ENCODE measurements at regions of chr1 and their contacts with region 1.

Region 1: GRCh38 chr1:202656951-202657646 is 53.2 kb downstream of the SYT2 start:
- DNase-seq: peak; percentile 39 to 86
- H3K4me3 ChIP-seq: no peak overlapping the region
- H3K27ac ChIP-seq: no peak overlapping the region
- H3K4me1 ChIP-seq: peaks cover 0 to 3% (median 2%) of the 10 kb centered on the region in 4 experiments; a peak in 3 of 7 replicates
- H3K27me3 ChIP-seq: no peaks in the 10 kb centered on the region; a peak in 1 of 7 replicates
- CTCF ChIP-seq: peak; percentile 60 to 73 (median 64)
- EP300 ChIP-seq: no peak
- POLR2A ChIP-seq: no peak
- RAD21 ChIP-seq: peak; percentile 36 to 50; a peak in 3 of 4 replicates

Region 2: GRCh38 chr1:202551683-202552082 is 105.4 kb before region 1 on chr1:
- CTCF ChIA-PET with region 1: no interaction called
- POLR2A ChIA-PET with region 1: no interaction called
- DNase-seq: no peak
- H3K4me3 ChIP-seq: no peak overlapping the region
- H3K27ac ChIP-seq: no peak overlapping the region
- H3K4me1 ChIP-seq: no peaks in the 10 kb centered on the region
- H3K27me3 ChIP-seq: no peaks in the 10 kb centered on the region
- CTCF ChIP-seq: no peak
- EP300 ChIP-seq: no peak
- POLR2A ChIP-seq: no peak
- RAD21 ChIP-seq: no peak

Region 3: GRCh38 chr1:202589190-202590030 is 67.7 kb before region 1 on chr1:
- CTCF ChIA-PET with region 1: interaction called, 27 read pairs
- POLR2A ChIA-PET with region 1: no interaction called
- DNase-seq: peak in 1 of 2 experiments; percentile 77
- H3K4me3 ChIP-seq: no peak overlapping the region
- H3K27ac ChIP-seq: no peak overlapping the region
- H3K4me1 ChIP-seq: no peaks in the 10 kb centered on the region
- H3K27me3 ChIP-seq: no peaks in the 10 kb centered on the region; a peak in 1 of 7 replicates
- CTCF ChIP-seq: no peak
- EP300 ChIP-seq: no peak
- POLR2A ChIP-seq: no peak
- RAD21 ChIP-seq: no peak

Region 4: GRCh38 chr1:202615501-202616354 is 41.4 kb before region 1 on chr1:
- CTCF ChIA-PET with region 1: interaction called, 11 read pairs
- POLR2A ChIA-PET with region 1: no interaction called
- DNase-seq: no peak
- H3K4me3 ChIP-seq: no peak overlapping the region
- H3K27ac ChIP-seq: no peak overlapping the region
- H3K4me1 ChIP-seq: peaks cover 3 to 9% (median 7%) of the 10 kb centered on the region in 4 experiments; a peak in 5 of 7 replicates
- H3K27me3 ChIP-seq: no peaks in the 10 kb centered on the region
- CTCF ChIP-seq: no peak
- EP300 ChIP-seq: no peak
- POLR2A ChIP-seq: no peak
- RAD21 ChIP-seq: no peak

Region 5: DNA sequence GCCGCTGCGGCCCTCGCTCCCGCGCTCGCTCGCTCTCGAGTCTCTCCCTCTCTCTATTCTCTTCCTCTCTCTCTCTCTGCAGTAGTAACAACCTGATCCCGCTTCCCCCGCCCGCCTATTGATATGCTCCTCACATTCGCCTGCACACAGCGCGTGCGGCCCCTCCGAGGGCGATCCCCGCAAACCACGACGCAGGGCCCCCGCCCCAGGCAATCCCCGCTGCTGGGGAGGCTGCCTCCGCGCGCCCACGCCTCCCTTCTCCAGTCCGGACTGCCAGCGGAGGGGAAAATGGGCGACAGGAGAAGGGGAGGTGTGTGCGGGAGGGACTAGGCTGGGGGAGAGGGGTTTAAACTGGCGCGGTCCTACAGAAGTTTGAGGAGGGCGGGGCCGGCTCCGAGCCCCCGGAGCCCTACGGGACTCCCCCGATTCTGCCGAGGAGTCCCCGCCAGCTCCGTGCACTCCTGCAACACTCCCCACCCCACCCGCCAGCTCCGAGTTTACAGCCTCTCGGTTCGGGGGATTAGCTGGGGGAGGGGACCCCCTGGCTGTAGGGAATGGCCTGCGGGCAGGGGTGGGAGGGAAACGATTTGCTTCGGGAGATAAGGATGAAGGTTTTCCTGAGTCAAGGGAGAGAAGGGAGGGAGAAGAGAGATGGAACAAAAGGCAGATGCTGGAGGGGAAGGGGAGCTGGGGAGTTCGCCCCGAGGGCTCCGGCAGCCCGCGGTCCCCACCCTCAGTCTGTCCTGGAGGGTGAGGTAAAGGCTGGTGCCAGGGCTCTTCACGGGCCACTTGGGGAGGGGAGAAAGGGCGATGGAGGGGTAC is 13.5 kb before region 1 on chr1:
- CTCF ChIA-PET with region 1: interaction called, 122 read pairs
- POLR2A ChIA-PET with region 1: interaction called, 5 read pairs
- DNase-seq: peak in 1 of 2 experiments; percentile 80
- H3K4me3 ChIP-seq: peak overlapping the region; percentile 51 to 87 (median 75)
- H3K27ac ChIP-seq: no peak overlapping the region
- H3K4me1 ChIP-seq: peaks cover 3 to 25% (median 12%) of the 10 kb centered on the region in 4 experiments
- H3K27me3 ChIP-seq: peaks cover 0 to 31% (median 30%) of the 10 kb centered on the region in 4 experiments; a peak in 5 of 7 replicates
- CTCF ChIP-seq: no peak
- EP300 ChIP-seq: no peak
- POLR2A ChIP-seq: no peak
- RAD21 ChIP-seq: no peak

Region 6: GRCh38 chr1:202680586-202681352 is 23.7 kb after region 1 on chr1:
- CTCF ChIA-PET with region 1: interaction called, 105 read pairs
- POLR2A ChIA-PET with region 1: interaction called, 3 read pairs
- DNase-seq: no peak
- H3K4me3 ChIP-seq: no peak overlapping the region; a peak in 1 of 8 replicates
- H3K27ac ChIP-seq: no peak overlapping the region
- H3K4me1 ChIP-seq: peaks cover 3 to 19% (median 6%) of the 10 kb centered on the region in 4 experiments; a peak in 5 of 7 replicates
- H3K27me3 ChIP-seq: no peaks in the 10 kb centered on the region
- CTCF ChIP-seq: no peak
- EP300 ChIP-seq: no peak
- POLR2A ChIP-seq: no peak
- RAD21 ChIP-seq: peak in 1 of 2 experiments; percentile 16; a peak in 2 of 4 replicates

Region 7: DNA sequence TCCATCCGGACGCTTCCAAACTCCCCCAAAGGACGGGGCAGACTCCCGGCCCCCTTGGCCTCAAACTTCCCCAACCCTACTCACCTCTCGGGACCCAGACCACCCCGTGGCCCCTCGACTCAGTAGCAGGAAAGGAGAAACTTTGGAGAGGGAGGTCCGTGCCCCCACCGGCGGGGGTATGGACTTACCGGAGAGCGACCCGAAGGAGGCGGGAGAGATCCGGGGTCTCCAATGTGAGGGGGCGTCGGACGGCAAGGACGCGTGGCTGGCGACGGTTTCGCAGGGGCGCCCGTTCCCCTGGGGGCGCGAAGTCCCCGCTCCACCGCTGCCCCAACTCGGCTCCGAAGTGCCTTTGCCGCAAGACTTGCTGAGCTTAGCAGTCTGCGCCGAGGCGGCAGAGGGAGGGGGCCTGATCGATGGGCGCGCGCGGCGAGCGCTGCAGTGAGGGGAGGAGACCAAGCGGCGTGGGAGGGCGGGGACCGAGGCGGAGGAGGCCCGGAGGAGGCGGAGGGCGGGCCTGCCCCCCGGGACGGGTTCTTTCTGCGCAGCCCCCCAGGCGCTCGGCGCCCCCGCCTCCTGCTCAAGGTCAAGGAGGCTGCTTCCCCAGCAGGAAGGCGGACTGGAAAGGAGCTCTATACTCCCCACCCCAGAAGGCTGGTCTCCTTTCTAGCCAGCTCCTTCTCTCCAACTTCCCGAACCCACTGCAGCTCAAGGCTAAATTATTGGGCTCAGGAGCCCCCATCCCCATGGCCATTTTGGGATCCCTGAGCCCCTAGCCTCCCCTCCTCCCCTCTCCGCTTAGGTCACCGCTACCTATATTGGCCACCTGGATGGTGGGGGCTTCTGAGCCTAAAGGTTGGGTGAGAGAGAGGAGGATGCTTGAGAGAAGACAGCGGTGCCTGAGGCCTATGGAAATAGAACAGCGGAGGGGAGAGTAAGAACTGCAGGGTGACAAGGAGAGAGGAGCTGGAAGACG is 53.3 kb after region 1 on chr1 and contains the start of gene SYT2:
- CTCF ChIA-PET with region 1: interaction called, 146 read pairs
- POLR2A ChIA-PET with region 1: interaction called, 4 read pairs
- DNase-seq: peak in 1 of 2 experiments; percentile 81
- H3K4me3 ChIP-seq: peak within 1 kb of the TSS; percentile 42 to 86 (median 66)
- H3K27ac ChIP-seq: no peak within 1 kb of the TSS
- H3K4me1 ChIP-seq: peaks cover 10 to 30% (median 21%) of the 10 kb centered on the region in 4 experiments
- H3K27me3 ChIP-seq: peaks cover 0 to 30% (median 19%) of the 10 kb centered on the region in 4 experiments; a peak in 5 of 7 replicates
- CTCF ChIP-seq: no peak
- EP300 ChIP-seq: no peak
- POLR2A ChIP-seq: no peak
- RAD21 ChIP-seq: no peak
- total RNA-seq, gene SYT2: 10.7 and 11.0 TPM in 2 replicates

Region 8: GRCh38 chr1:202745323-202745888 is 88.3 kb after region 1 on chr1:
- CTCF ChIA-PET with region 1: no interaction called
- POLR2A ChIA-PET with region 1: no interaction called
- DNase-seq: no peak
- H3K4me3 ChIP-seq: no peak overlapping the region
- H3K27ac ChIP-seq: no peak overlapping the region
- H3K4me1 ChIP-seq: no peaks in the 10 kb centered on the region
- H3K27me3 ChIP-seq: no peaks in the 10 kb centered on the region
- CTCF ChIP-seq: no peak
- EP300 ChIP-seq: no peak
- POLR2A ChIP-seq: no peak
- RAD21 ChIP-seq: no peak

Region 9: DNA sequence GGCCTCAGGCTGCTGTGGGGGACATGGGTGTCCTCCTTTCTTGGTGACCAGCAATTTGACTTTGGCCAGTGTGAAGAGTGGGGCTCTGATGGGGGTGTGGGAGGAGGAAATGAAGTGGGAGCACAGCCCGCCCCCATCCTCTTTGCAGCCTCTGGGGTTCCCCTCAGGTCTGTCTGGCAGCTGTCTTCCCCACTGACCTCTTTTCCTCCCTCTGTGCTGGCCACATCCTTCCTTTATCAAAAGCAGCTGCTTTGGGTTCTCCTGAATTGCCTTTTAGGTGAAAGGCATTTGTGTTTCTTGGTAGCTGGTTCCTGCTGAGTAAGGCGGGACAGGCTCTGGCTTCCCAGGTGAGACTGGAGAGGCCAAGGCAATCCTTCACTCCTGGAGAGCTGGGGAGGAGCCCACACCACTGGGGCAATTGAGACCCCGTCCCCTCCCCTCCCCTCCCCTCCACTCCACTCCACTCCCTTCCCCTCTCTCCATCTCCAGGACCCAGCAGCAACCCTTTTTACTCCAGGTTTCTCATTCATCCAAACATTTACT is 178.5 kb after region 1 on chr1:
- CTCF ChIA-PET with region 1: no interaction called
- POLR2A ChIA-PET with region 1: no interaction called
- DNase-seq: no peak
- H3K4me3 ChIP-seq: no peak overlapping the region
- H3K27ac ChIP-seq: no peak overlapping the region
- H3K4me1 ChIP-seq: peaks cover 0 to 6% (median 5%) of the 10 kb centered on the region in 4 experiments; a peak in 6 of 7 replicates
- H3K27me3 ChIP-seq: no peaks in the 10 kb centered on the region
- CTCF ChIP-seq: no peak
- EP300 ChIP-seq: no peak
- POLR2A ChIP-seq: no peak
- RAD21 ChIP-seq: no peak

Region 10: DNA sequence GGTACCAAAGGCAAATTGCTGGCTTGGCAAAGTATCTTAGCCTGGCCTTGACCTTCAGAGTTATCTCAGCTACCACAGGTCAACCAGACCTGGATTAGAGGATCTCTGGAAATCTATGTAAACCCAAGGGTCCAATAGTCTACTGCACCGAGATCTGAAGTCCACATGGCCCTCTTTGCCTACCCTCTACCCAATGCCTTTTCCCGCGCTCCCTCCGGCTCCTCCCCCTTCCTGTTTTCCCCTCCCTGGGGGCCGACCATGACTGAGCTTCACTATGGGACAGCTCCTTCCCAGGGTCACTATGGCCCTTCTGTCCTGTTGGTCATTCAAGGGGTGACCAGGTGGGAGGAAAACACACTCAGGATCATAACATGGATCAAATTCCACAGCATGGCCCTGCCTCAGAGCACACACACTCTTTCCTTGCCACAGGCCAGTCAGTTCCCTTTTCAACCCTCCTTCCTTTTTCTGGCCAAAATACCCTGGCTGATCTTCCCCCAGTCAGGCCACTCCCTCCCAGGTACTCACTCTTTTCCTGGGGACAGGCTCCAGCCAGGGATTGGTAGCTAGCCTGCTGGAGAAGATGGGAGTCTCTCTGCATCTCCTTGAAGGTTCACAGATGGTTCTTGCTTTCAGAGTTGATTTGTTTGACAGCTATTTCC is 331.0 kb after region 1 on chr1:
- CTCF ChIA-PET with region 1: no interaction called
- POLR2A ChIA-PET with region 1: no interaction called
- DNase-seq: no peak
- H3K4me3 ChIP-seq: no peak overlapping the region
- H3K27ac ChIP-seq: no peak overlapping the region
- H3K4me1 ChIP-seq: no peaks in the 10 kb centered on the region
- H3K27me3 ChIP-seq: no peaks in the 10 kb centered on the region
- CTCF ChIP-seq: no peak
- EP300 ChIP-seq: no peak
- POLR2A ChIP-seq: no peak
- RAD21 ChIP-seq: no peak

Measured in H1 (cell line).